Activated B cell treated with CpG ODN at 0.5 μM for 24 hours (primary cell): ENCODE measurements at regions of chr9 and their contacts with region 1.

Region 1: GRCh38 chr9:26863074-26863473 is 29.5 kb downstream of the CAAP1 start:
- DNase-seq: no peak
- ATAC-seq: no peak
- H3K4me3 Mint-ChIP-seq: no peak overlapping the region
- H3K27ac Mint-ChIP-seq: no peak overlapping the region
- H3K4me1 Mint-ChIP-seq: no peaks in the 10 kb centered on the region
- H3K27me3 Mint-ChIP-seq: no peaks in the 10 kb centered on the region
- CTCF ChIP-seq: no peak

Region 2: DNA sequence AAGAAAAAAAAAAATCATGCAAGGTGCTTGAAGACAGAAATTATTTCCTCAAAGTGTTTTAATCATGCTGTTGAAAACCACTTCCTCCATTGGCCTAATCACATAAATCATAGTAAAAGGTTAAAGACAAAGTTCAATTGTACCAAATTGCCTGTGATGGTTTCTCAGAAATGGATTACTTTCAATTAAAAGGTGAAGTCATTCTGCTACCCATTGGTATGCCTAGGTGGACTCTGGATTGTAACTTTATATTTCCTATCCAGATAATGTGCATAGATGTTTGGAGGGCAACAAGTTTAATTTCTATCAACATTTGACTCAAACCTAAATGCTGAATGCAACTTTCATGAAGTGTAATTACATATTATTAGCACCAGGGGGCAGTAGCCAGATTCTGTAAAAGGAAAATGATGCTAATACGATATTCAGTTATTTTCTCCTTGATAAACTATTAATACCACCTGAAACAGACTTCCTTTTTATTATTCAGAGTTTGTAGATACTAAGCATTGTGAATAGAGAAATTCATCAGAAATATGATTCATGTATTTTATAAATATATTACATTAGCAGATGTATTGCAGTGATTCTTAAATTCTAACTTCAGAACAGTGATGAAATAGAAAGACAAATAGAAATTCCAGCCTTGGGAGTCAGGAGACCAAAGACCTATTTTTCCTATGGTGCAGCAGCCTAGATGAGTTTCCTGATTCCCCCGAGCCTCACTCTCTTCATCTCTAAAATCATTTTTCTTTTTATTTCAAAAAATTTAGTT is 118.7 kb before region 1 on chr9:
- CTCF ChIA-PET with region 1: no interaction called
- POLR2A ChIA-PET with region 1: no interaction called
- intact Hi-C with region 1: loop called (anchors 5 kb)
- DNase-seq: no peak
- ATAC-seq: no peak
- H3K4me3 Mint-ChIP-seq: no peak overlapping the region
- H3K27ac Mint-ChIP-seq: no peak overlapping the region
- H3K4me1 Mint-ChIP-seq: no peaks in the 10 kb centered on the region
- H3K27me3 Mint-ChIP-seq: peaks cover 1% of the 10 kb centered on the region
- CTCF ChIP-seq: peak; percentile 63